ENCODE measurements at regions of chr3 and their contacts with region 1.

Region 1: DNA sequence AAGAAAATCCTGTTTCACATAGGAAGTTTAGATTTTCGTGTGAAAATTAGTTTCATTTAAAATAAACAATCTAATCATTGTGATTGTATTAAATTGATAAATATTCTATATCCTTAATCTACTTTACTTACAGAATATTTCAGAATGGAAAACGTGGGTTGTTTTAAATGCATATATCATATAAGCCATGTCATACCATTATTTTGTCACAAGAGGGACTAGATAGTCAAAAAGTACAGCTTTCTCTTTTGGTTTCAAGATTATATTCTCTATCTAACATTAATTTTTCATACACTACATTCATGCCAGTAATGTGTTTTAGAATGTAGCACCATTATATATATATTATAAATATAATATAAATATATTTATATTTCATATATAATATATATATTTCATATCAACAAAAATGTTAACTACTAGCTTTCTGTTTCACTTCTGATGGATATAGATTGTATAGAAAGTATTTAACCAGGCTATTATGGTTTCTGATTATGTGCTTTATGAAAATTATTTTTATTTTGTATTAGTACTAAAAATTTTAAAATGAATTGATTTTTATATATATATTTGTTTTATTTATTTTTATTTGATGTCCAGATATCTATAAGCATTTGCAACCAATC is 45.3 kb downstream of the OSTN start:
- DNase-seq: peak in 1 of 4 donors; percentile 16
- ATAC-seq: no peak
- H3K4me3 ChIP-seq: no peak overlapping the region
- H3K27ac ChIP-seq: no peak overlapping the region
- H3K4me1 ChIP-seq: no peaks in the 10 kb centered on the region
- H3K27me3 ChIP-seq: no peaks in the 10 kb centered on the region
- CTCF ChIP-seq: peak; percentile 19 to 32

Region 2: GRCh38 chr3:191282262-191283215 is 38.2 kb after region 1 on chr3:
- intact Hi-C with region 1: no loop called
- DNase-seq: no peak
- ATAC-seq: no peak
- H3K4me3 ChIP-seq: no peak overlapping the region
- H3K27ac ChIP-seq: no peak overlapping the region
- H3K4me1 ChIP-seq: no peaks in the 10 kb centered on the region
- H3K27me3 ChIP-seq: no peaks in the 10 kb centered on the region
- CTCF ChIP-seq: no peak

Region 3: GRCh38 chr3:191388823-191389222 is 144.5 kb after region 1 on chr3:
- intact Hi-C with region 1: loop called in 1 of 2 experiments (anchors 10 kb)
- DNase-seq: no peak
- ATAC-seq: no peak
- H3K4me3 ChIP-seq: no peak overlapping the region
- H3K27ac ChIP-seq: no peak overlapping the region
- H3K4me1 ChIP-seq: peaks cover 0 to 4% of the 10 kb centered on the region in 2 donors
- H3K27me3 ChIP-seq: no peaks in the 10 kb centered on the region
- CTCF ChIP-seq: peak in 1 of 2 donors; percentile 14

Measured in left lung (tissue), 14 donors.